ENCODE measurements at regions of chr11 and their contacts with region 1.

Region 1: DNA sequence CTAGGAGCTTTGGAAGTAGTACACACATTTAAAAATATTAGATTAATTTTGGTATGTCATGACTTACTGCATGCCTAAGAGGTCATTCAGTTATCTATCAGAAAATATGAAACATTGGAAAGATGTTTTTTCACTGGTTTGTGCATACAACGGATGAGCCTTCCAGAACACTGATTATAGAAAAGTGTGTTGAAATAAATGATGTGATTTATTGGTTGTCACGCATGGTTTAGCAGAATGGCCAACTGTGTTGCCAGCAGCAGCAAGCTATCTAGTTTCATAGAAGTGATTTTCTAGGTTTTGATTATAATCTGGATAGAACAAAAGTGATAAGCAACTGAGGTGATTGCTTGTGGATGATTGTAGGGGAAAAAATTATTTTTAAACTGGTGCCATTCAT is 53.6 kb downstream of the DDX10 start:
- DNase-seq: no peak
- ATAC-seq: no peak
- H3K4me3 Mint-ChIP-seq: no peak overlapping the region
- H3K27ac Mint-ChIP-seq: no peak overlapping the region
- H3K4me1 Mint-ChIP-seq: peaks cover 8% of the 10 kb centered on the region
- H3K27me3 Mint-ChIP-seq: no peaks in the 10 kb centered on the region

Region 2: GRCh38 chr11:108887436-108888238 is 169.2 kb after region 1 on chr11:
- CTCF ChIA-PET with region 1: no interaction called
- POLR2A ChIA-PET with region 1: interaction called, 10 read pairs
- intact Hi-C with region 1: no loop called
- DNase-seq: no peak
- ATAC-seq: no peak
- H3K4me3 Mint-ChIP-seq: no peak overlapping the region
- H3K27ac Mint-ChIP-seq: no peak overlapping the region
- H3K4me1 Mint-ChIP-seq: peaks cover 14% of the 10 kb centered on the region
- H3K27me3 Mint-ChIP-seq: no peaks in the 10 kb centered on the region

Measured in activated CD4-positive, alpha-beta T cell treated with anti-CD3 and anti-CD28 coated beads for 36 hours (primary cell).